Gastrocnemius medialis (tissue), 4 donors: ENCODE measurements at regions of chr16 and their contacts with region 1.

Region 1: GRCh38 chr16:47311738-47312505 is 148.9 kb downstream of the ITFG1 start:
- DNase-seq: peak in 1 of 2 donors; percentile 25
- ATAC-seq: peak; percentile 45 to 67
- H3K4me3 ChIP-seq: no peak overlapping the region
- H3K27ac ChIP-seq: peak overlapping the region in 3 of 4 donors; percentile 27 to 80 (median 77)
- H3K4me1 ChIP-seq: peaks cover 43 to 60% of the 10 kb centered on the region in 2 donors
- H3K27me3 ChIP-seq: no peaks in the 10 kb centered on the region
- CTCF ChIP-seq: no peak
- POLR2A ChIP-seq: no peak

Region 2: DNA sequence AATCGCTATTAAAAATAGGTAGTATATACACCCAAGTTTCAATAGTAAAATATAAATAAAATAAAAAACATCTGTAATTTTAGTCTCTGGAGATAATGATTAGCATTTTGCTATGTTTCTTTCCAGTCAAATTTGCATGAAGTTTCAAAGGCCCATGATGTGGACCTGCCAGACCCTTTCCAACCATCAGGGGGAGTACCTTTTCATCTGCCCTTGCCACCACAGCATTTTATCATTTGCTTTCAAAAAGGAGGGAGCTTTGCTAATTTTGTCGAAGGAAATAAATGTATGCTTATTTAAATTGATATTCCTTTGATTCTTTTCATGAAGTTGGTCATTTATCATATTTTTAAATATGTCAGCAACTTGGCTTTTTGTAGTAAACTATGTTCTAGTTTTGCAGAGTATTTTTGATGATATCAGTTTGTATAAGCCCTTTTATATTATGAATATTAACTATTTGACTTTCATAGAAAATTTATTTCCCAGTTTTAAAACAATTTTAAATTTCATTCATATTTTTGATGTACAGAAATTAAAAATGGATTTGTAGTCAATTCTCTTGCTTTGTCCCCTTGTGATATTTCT is 53.0 kb before region 1 on chr16:
- in situ Hi-C with region 1: no loop called
- intact Hi-C with region 1: no loop called
- DNase-seq: no peak
- ATAC-seq: no peak
- H3K4me3 ChIP-seq: no peak overlapping the region
- H3K27ac ChIP-seq: no peak overlapping the region
- H3K4me1 ChIP-seq: peaks cover 0 to 6% of the 10 kb centered on the region in 2 donors
- H3K27me3 ChIP-seq: no peaks in the 10 kb centered on the region
- CTCF ChIP-seq: peak in 4 of 5 experiments; percentile 33 to 66 (median 49)
- POLR2A ChIP-seq: no peak

Region 3: GRCh38 chr16:48556913-48557351 is 1245.0 kb after region 1 on chr16:
- in situ Hi-C with region 1: no loop called
- intact Hi-C with region 1: loop called (anchors 10 kb)
- DNase-seq: no peak
- ATAC-seq: no peak
- H3K4me3 ChIP-seq: no peak overlapping the region
- H3K27ac ChIP-seq: peak overlapping the region in 1 of 4 donors; percentile 7
- H3K4me1 ChIP-seq: peaks cover 75 to 79% of the 10 kb centered on the region in 2 donors
- H3K27me3 ChIP-seq: no peaks in the 10 kb centered on the region
- CTCF ChIP-seq: no peak
- POLR2A ChIP-seq: no peak